GM10248 (cell line): ENCODE measurements at regions of chr22 and their contacts with region 1.

Region 1: GRCh38 chr22:21629262-21630149 is at the start of gene YDJC:
- DNase-seq: peak; percentile 95
- CTCF ChIP-seq: peak; percentile 76

Region 2: DNA sequence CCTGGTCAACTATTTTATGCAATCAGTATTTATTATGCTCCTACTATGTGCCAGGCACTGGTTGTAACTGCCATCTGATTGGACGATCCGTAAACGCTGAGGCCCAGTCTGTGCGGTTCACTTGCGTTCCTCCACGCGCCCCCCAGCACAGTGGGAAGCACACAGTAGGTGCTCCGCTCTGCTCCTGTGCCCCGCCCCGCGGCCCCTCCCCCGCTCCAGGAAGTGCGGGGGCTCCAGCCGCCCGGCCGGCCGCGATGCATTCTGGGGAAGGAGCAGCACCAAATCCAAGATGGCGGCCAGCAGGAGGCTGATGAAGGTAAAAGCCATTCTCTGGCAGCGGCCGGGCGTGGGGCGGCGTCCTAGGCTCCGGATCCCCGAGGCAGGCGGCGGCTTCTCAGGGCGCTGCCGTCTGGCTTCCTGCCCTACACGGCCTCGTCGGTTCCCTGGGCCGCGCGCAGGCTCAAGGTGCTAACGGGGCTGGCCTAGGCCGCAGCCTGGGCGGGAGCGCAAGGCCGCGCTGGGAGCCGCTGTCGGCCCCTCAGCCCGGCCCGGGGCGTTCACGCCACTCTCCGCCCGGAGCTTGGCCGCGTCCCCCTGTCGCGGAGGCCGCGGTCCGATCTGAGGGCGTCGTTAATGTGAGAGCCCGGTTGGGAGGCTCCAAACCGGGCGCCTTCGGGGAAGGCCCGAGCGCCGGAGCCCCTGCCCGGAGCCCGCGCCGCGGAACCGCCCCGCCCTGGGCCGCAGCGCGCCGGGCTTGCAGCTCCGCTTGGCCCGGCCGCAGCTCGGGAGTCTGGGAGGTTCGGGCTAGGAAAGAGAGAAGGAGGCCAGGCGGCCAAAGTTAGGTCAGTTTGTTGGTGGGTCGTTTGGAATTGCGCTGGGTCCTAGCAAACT is 61.8 kb before region 1 on chr22 and contains the start of gene UBE2L3:
- CTCF ChIA-PET with region 1: interaction called, 10 read pairs
- POLR2A ChIA-PET with region 1: no interaction called
- DNase-seq: peak; percentile 92
- CTCF ChIP-seq: no peak

Region 3: DNA sequence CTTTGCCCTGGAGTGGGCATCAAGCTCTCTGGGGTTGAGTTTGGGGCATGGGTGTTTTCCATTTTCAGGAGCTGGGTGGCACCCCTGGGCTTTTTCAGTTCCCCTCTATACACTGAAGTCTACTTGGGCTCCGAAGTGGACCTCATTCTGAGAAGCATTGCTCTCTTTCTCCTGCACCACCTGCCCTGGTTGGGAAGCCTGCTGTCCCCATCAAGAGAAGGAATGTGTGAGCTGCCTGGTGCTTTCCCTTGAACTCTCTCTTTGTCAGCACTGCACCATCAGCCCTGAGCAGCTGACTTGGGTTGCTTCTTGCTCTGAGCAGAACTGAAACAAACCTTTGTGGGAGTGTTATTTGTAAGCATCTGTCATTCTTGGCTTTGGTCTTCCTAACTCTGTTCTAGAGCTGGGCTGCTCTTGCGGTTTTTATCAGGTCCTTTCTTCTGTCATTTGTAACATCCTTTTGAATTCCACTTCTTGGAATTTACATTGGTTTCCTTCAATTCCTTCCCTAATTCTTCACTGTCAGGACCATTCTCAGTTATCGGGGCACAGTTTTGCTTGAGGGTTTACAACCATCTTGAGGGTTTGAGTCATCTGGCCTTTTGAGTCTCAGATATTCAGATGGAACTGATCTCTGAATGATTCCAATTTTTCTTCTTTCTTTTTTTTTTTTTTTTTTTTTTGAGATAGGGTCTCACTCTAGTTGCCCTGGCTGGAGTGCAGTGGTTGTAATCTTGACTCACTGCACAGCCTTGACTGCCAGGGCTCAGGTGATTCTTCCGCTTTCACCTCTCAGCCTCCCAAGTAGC is 41.5 kb before region 1 on chr22:
- CTCF ChIA-PET with region 1: interaction called, 16 read pairs
- POLR2A ChIA-PET with region 1: interaction called, 3 read pairs
- DNase-seq: peak; percentile 84
- CTCF ChIP-seq: no peak

Region 4: DNA sequence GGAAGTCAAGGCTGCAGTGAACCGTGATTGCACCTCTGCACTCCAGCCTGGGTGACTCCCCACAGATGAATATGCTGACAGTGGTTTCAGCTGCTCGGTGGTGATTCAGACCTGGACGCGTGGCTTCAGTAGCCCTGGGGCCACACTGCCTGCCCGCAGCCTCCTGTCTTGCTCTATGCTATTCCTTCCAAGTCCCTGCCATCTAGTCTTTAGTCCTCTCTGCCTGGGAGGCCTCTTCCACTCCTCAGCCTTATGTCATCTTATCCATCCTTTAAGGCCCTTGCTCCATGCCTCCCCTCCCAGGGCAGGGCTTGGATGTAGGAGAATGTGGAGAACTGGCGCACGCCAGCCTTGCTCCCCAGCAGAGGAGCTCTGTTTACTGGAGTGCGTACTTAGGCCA is 22.7 kb before region 1 on chr22:
- CTCF ChIA-PET with region 1: interaction called, 11 read pairs
- POLR2A ChIA-PET with region 1: no interaction called
- DNase-seq: no peak
- CTCF ChIP-seq: no peak

Region 5: GRCh38 chr22:21612865-21613265 is 16.6 kb before region 1 on chr22:
- CTCF ChIA-PET with region 1: interaction called, 58 read pairs
- POLR2A ChIA-PET with region 1: no interaction called
- DNase-seq: no peak
- CTCF ChIP-seq: no peak

Region 6: DNA sequence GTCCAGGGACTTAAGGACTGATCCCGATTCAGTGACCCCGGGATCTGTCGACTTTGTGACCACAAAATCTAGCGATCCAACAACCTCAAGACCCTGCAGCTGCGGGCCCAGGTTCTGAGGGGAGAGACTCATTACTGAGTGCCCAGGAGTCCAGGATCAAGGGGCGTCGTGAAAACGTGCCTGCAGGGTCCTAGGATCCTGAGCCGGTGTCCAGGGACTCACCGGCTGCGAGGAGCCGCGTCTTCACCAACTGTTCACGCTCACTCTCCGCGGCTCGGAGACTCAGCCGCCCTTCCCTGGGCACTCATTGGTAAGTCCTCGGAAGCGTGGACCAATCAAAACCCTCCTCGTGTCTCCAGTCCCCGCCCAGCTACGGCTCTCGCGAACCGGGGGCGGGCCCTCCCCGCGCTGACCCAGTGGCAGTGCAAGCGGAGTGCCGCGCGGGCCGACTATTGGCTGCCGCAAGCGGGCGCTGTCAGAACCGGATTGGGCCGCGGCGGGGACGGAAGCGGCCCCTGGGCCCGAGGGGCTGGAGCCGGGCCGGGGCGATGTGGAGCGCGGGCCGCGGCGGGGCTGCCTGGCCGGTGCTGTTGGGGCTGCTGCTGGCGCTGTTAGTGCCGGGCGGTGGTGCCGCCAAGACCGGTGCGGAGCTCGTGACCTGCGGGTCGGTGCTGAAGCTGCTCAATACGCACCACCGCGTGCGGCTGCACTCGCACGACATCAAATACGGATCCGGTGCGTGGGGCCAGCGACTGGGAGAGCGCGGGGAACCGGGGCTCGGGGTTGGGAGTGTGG is 12.5 kb after region 1 on chr22 and contains the start of gene SDF2L1:
- CTCF ChIA-PET with region 1: interaction called, 274 read pairs
- POLR2A ChIA-PET with region 1: interaction called, 6 read pairs
- DNase-seq: peak; percentile 98
- CTCF ChIP-seq: peak; percentile 28

Region 7: GRCh38 chr22:21652010-21652546 is 22.6 kb after region 1 on chr22:
- CTCF ChIA-PET with region 1: interaction called, 274 read pairs
- POLR2A ChIA-PET with region 1: interaction called, 4 read pairs
- DNase-seq: peak; percentile 93
- CTCF ChIP-seq: no peak

Region 8: DNA sequence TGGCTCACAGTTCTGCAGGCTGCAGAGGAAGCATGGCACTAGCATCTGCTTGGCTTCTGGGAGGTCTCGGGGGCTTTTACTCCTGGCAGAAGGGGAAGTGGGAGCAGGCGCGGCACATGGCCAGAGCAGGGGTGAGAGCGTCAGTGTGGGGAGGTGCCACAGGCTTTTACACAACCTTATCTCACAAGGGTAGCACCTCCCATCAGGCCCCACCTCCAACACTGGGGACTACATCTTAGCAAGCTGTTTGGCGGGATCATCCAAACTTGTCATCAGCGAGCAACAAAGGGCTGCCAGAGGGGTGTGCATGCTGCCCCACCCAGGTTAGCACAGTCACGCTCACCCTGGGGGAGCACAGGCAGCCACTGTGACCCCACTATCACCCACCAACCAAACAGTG is 125.0 kb after region 1 on chr22:
- CTCF ChIA-PET with region 1: no interaction called
- POLR2A ChIA-PET with region 1: no interaction called
- DNase-seq: peak; percentile 39
- CTCF ChIP-seq: no peak